A673 (cell line): ENCODE measurements at regions of chr5 and their contacts with region 1.

Region 1: GRCh38 chr5:36403632-36404311 is 102.1 kb upstream of the RANBP3L start:
- DNase-seq: peak; percentile 96
- H3K4me3 ChIP-seq: no peak overlapping the region
- H3K27ac ChIP-seq: peak overlapping the region; percentile 52
- H3K4me1 ChIP-seq: peaks cover 30% of the 10 kb centered on the region
- H3K27me3 ChIP-seq: no peaks in the 10 kb centered on the region
- CTCF ChIP-seq: no peak

Region 2: DNA sequence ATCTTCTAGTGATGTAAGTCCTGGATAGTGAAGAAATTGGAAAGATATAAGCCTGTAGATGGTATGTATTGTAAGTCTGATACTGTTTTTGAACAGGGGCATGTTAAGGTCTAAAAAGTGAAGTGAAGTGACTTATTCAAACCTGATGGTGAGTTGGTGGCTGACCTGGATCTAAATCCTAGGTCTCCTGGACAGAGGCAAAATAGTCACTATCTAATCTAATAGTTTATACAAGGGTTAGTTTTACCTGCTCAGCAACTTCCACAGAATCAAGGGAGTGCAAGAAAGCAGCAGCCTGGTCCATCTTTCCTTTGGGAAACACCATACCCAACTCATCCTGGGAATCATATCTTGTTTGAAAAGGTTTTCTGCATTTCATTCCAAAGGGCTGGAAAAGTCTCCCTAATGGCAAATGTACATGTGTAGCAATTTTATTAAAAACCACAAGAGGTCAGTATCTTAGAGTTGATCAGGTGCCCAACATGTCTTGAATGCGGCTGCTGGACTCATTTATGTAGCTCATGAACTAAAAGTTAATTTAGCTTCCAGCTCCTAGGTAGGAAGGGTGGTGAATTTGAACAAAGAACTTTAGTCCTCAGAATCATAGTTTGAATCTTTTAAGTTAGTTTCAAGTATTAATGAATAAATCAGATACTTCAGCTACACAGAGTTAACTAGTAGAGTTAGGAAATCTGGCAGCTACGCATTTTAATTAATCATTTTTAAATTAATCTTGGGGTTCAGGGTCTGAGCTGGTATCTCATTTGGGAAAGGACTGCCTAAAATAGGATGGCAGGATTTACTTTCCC is 225.9 kb before region 1 on chr5:
- CTCF ChIA-PET with region 1: no interaction called
- POLR2A ChIA-PET with region 1: no interaction called
- intact Hi-C with region 1: loop called (anchors 5 kb)
- DNase-seq: peak; percentile 49
- H3K4me3 ChIP-seq: no peak overlapping the region
- H3K27ac ChIP-seq: no peak overlapping the region
- H3K4me1 ChIP-seq: peaks cover 7% of the 10 kb centered on the region
- H3K27me3 ChIP-seq: no peaks in the 10 kb centered on the region
- CTCF ChIP-seq: peak; percentile 65